B cell (primary cell): ENCODE measurements at regions of chr17 and their contacts with region 1.

Region 1: GRCh38 chr17:6651357-6651918 is at the starts of genes C17orf100 and MED31:
- DNase-seq: peak; percentile 95
- ATAC-seq: peak; percentile 91
- H3K4me3 ChIP-seq: peak within 1 kb of the TSS; percentile 63 to 96 (median 74)
- H3K4me3 Mint-ChIP-seq: peak within 1 kb of the TSS; percentile 99
- H3K27ac ChIP-seq: peak within 1 kb of the TSS; percentile 96 to 99
- H3K27ac Mint-ChIP-seq: peak within 1 kb of the TSS; percentile 99
- H3K4me1 ChIP-seq: peaks cover 28 to 45% of the 10 kb centered on the region in 2 donors
- H3K4me1 Mint-ChIP-seq: peaks cover 69% of the 10 kb centered on the region
- H3K27me3 ChIP-seq: no peaks in the 10 kb centered on the region
- H3K27me3 Mint-ChIP-seq: no peaks in the 10 kb centered on the region
- CTCF ChIP-seq: no peak
- total RNA-seq, gene C17orf100: 7.7 and 11.6 TPM in 2 replicates
- total RNA-seq, gene MED31: 24.7 and 25.5 TPM in 2 replicates

Region 2: DNA sequence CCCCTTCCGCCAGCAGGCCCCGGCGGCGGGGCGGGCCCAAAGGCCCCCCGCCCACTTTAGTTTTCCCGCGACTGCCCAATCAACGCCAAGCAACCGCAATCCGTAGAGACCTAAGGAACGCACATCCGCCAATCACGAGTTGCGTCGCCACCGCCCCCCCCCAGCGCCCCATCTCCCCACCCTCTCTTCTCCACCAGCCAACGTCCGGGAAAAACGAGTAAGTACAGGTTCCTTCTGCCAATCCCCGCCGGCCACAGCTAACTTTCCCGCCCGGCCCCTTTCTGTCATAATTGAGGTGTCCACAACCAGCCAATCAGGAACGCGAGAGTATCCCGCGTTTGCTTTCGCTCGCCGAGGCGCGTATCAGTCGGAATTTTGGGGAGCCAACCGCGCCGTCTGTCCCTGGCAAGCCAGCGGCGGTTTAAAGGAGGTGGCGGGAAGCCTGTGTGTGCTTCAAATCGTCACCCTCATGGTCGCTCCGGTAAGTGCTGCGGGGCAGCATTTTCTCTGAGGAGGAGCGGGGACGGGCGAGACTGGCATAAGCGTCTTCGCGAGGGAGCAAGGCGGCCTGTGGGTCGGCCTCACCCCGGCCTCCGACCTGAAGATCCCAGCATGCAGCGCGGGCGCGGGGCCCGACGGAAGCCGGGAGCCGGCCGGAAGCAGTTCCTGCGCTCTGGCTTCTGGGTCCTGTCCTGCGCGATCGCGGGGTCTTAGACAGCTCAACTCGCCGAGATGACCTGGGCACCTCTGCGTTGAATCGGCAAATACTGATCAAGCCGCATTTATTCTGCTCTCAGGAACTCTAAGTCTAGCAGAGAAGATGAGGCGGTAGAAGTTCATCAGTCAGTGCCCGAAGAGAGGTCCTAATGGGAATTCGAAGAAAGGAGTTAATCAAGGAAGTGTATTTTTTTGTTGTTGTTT is 1165.0 kb before region 1 on chr17 and contains the start of gene MIS12:
- CTCF ChIA-PET with region 1: no interaction called
- POLR2A ChIA-PET with region 1: no interaction called
- intact Hi-C with region 1: loop called (anchors 10 kb)
- DNase-seq: peak; percentile 98
- ATAC-seq: peak; percentile 90
- H3K4me3 ChIP-seq: peak within 1 kb of the TSS; percentile 90 to 99 (median 92)
- H3K4me3 Mint-ChIP-seq: peak within 1 kb of the TSS; percentile 94
- H3K27ac ChIP-seq: peak within 1 kb of the TSS; percentile 99 to 100
- H3K27ac Mint-ChIP-seq: peak within 1 kb of the TSS; percentile 97
- H3K4me1 ChIP-seq: peaks cover 17 to 26% of the 10 kb centered on the region in 2 donors
- H3K4me1 Mint-ChIP-seq: peaks cover 42% of the 10 kb centered on the region
- H3K27me3 ChIP-seq: no peaks in the 10 kb centered on the region
- H3K27me3 Mint-ChIP-seq: no peaks in the 10 kb centered on the region
- CTCF ChIP-seq: no peak
- total RNA-seq, gene MIS12: 33.2 and 41.1 TPM in 2 replicates

Region 3: DNA sequence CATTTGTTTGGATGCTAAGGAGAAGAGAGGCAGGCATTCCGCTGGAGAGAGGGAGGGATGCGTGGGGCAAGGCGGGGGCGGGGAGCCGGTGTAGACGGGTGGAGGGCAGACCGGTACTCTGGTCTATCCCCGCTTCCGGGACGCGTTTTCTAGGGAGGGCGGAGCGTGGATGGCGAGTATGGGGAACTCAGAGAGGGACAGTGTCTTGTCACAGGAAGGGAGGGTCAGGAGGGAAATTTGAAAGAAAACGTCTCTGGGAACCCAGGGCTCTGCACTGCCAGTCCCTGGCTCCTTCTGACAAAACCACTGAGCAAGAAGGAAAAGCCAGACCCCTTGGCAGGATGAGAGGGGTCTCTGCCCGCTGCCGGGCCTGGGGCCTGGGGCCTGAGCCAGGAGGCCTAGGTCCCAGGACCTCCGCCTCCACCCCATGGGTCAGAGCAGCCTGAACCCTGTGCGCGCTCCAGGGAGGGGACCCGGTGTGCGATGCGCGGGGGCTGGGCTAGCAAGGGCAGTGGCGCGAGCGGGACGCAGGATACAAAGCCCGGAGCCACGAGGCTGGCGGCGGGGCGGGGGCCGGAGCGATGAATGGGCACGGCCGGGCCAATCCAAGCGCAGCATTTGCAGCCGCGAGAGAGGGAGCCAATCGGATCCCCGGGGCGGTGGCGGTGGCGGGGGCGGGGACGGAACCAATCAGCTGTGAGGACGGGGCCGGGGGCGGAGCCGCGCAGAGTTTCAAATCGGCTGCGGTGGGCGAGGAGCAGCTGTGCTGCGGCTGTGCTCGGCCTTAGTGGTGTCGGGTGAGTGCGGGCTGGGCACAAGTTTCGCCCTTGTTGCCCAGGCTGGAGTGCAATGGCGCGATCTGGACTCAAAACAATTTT is 207.5 kb before region 1 on chr17 and contains the start of gene PIMREG:
- CTCF ChIA-PET with region 1: no interaction called
- POLR2A ChIA-PET with region 1: no interaction called
- intact Hi-C with region 1: no loop called
- DNase-seq: peak; percentile 97
- ATAC-seq: peak; percentile 96
- H3K4me3 ChIP-seq: peak within 1 kb of the TSS; percentile 55 to 74 (median 69)
- H3K4me3 Mint-ChIP-seq: peak within 1 kb of the TSS; percentile 84
- H3K27ac ChIP-seq: peak within 1 kb of the TSS in 1 of 2 donors; percentile 58
- H3K27ac Mint-ChIP-seq: peak within 1 kb of the TSS; percentile 80
- H3K4me1 ChIP-seq: peaks cover 5 to 14% of the 10 kb centered on the region in 2 donors
- H3K4me1 Mint-ChIP-seq: peaks cover 12% of the 10 kb centered on the region
- H3K27me3 ChIP-seq: peaks cover 0 to 10% (median 4%) of the 10 kb centered on the region in 4 experiments
- H3K27me3 Mint-ChIP-seq: peaks cover 20% of the 10 kb centered on the region
- CTCF ChIP-seq: no peak
- total RNA-seq, gene PIMREG: not detected in 2 replicates

Region 4: GRCh38 chr17:6473128-6473767 is 178.2 kb before region 1 on chr17:
- CTCF ChIA-PET with region 1: interaction called, 13 read pairs
- POLR2A ChIA-PET with region 1: no interaction called
- intact Hi-C with region 1: loop called (anchors 2 kb)
- DNase-seq: peak; percentile 74
- ATAC-seq: peak; percentile 74
- H3K4me3 ChIP-seq: no peak overlapping the region
- H3K4me3 Mint-ChIP-seq: no peak overlapping the region
- H3K27ac ChIP-seq: no peak overlapping the region
- H3K27ac Mint-ChIP-seq: no peak overlapping the region
- H3K4me1 ChIP-seq: peaks cover 0 to 2% of the 10 kb centered on the region in 2 donors
- H3K4me1 Mint-ChIP-seq: peaks cover 4% of the 10 kb centered on the region
- H3K27me3 ChIP-seq: no peaks in the 10 kb centered on the region
- H3K27me3 Mint-ChIP-seq: peaks cover 11% of the 10 kb centered on the region
- CTCF ChIP-seq: peak; percentile 98

Region 5: DNA sequence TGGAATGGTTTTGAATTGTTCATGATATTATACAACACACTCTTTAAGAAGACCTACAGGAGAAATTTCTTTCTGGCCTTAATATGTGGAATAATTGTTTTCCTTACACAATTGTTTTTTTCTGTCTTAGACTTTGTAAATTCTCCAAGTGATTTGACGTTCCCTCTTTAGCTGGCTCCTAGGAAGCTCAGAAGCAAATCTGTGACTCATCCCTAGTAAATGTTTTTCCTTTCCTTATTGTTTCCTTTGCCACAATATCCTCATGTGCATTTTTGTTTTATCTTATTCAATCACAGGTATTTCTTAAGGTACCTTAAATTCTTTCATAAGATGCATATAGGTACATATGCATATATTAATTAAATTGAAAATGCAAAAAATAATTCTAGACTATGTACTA is 24.4 kb before region 1 on chr17:
- CTCF ChIA-PET with region 1: no interaction called
- POLR2A ChIA-PET with region 1: no interaction called
- intact Hi-C with region 1: no loop called
- DNase-seq: no peak
- ATAC-seq: no peak
- H3K4me3 ChIP-seq: no peak overlapping the region
- H3K4me3 Mint-ChIP-seq: no peak overlapping the region
- H3K27ac ChIP-seq: no peak overlapping the region
- H3K27ac Mint-ChIP-seq: no peak overlapping the region
- H3K4me1 ChIP-seq: no peaks in the 10 kb centered on the region
- H3K4me1 Mint-ChIP-seq: no peaks in the 10 kb centered on the region
- H3K27me3 ChIP-seq: no peaks in the 10 kb centered on the region
- H3K27me3 Mint-ChIP-seq: no peaks in the 10 kb centered on the region
- CTCF ChIP-seq: no peak

Region 6: DNA sequence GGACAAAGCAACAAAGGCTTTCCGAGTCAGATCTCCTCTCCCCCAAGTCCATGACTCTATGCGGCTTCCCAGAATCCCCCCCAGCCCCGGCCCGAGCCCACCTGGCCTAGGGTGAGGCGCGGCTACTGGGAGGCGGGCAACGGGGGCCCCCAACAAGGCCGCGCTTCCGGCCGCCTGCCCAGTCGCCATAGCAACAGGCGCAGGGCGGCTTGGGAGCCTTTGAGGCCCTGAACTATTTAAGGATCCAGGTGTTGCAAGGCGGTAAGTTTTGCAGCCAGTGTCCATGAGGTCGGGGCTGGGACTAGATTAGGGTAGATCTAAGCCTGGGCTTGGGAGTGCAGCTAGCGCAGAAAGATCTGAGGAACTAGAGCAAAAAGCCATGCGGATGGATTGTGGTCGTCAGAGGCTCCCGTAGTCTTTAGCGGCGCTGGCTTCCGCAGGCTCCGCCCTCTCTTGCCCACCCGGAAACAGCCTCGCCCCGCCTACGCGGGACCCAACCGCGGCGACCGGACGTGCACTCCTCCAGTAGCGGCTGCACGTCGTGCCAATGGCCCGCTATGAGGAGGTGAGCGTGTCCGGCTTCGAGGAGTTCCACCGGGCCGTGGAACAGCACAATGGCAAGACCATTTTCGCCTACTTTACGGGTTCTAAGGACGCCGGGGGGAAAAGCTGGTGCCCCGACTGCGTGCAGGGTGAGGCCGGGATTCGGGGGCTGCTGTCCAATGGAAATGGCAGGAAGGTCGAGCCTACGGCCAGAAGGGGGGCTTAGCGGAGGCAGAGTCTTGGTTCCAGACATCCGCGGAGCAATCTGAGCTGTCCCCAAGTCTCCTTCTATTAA is 10.7 kb before region 1 on chr17 and contains the starts of genes KIAA0753 and TXNDC17:
- CTCF ChIA-PET with region 1: interaction called, 5 read pairs
- POLR2A ChIA-PET with region 1: interaction called, 4 read pairs
- intact Hi-C with region 1: loop called (anchors 1 kb)
- DNase-seq: peak; percentile 95
- ATAC-seq: peak; percentile 95
- H3K4me3 ChIP-seq: peak within 1 kb of the TSS; percentile 83 to 94 (median 89)
- H3K4me3 Mint-ChIP-seq: peak within 1 kb of the TSS; percentile 98
- H3K27ac ChIP-seq: peak within 1 kb of the TSS; percentile 64 to 89
- H3K27ac Mint-ChIP-seq: peak within 1 kb of the TSS; percentile 99
- H3K4me1 ChIP-seq: peaks cover 22 to 30% of the 10 kb centered on the region in 2 donors
- H3K4me1 Mint-ChIP-seq: peaks cover 37% of the 10 kb centered on the region
- H3K27me3 ChIP-seq: no peaks in the 10 kb centered on the region
- H3K27me3 Mint-ChIP-seq: no peaks in the 10 kb centered on the region
- CTCF ChIP-seq: no peak
- total RNA-seq, gene KIAA0753: 28.7 and 29.1 TPM in 2 replicates
- total RNA-seq, gene TXNDC17: 18.2 and 19.5 TPM in 2 replicates

Region 7: GRCh38 chr17:7014261-7014994 is 363.0 kb after region 1 on chr17:
- CTCF ChIA-PET with region 1: no interaction called
- POLR2A ChIA-PET with region 1: no interaction called
- intact Hi-C with region 1: loop called (anchors 2 kb)
- DNase-seq: peak; percentile 99
- ATAC-seq: peak; percentile 81
- H3K4me3 ChIP-seq: peak overlapping the region; percentile 95 to 100 (median 96)
- H3K4me3 Mint-ChIP-seq: peak overlapping the region; percentile 99
- H3K27ac ChIP-seq: peak overlapping the region; percentile 97 to 99
- H3K27ac Mint-ChIP-seq: peak overlapping the region; percentile 100
- H3K4me1 ChIP-seq: peaks cover 40 to 59% of the 10 kb centered on the region in 2 donors
- H3K4me1 Mint-ChIP-seq: peaks cover 54% of the 10 kb centered on the region
- H3K27me3 ChIP-seq: no peaks in the 10 kb centered on the region
- H3K27me3 Mint-ChIP-seq: no peaks in the 10 kb centered on the region
- CTCF ChIP-seq: peak; percentile 76